Left lung (tissue), 14 donors: ENCODE measurements at regions of chr1 and their contacts with region 1.

Region 1: DNA sequence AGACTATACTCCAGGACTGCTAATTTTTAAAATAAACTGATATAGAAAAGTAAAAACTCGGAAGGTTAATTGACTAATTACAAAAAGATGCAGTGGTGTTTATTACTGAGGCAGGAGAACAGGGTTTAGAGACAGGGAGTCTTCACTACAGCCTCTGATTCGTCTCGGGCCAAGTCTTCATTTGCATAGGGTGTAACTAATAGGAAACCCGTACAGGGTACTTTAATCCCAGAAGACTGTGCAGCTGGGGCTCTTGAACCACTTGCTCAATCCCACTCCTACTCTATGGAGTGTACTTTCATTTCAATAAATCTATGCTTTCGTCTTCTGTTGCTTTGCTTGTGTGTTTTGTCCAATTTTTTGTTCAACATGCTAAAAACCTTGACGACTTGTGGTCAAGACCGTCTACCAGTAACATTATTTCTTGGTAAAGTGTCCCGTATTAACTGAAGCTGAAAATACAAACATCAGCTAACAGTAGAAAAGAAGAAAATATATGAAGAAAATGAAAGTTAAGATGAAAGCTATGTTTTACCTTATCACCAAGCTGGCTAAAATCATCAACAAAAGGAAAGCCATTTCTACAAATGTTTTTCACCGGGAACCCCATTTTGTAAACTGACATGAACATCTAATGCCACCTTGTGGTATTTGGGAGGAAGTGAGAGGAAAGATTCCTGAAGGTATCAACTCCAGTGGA is 8.0 kb downstream of the SDHB start:
- DNase-seq: peak in 2 of 4 donors; percentile 33 to 57
- ATAC-seq: peak; percentile 94
- H3K4me3 ChIP-seq: peak overlapping the region in 1 of 2 donors; percentile 19
- H3K27ac ChIP-seq: peak overlapping the region; percentile 29 to 46
- H3K4me1 ChIP-seq: peaks cover 5 to 23% of the 10 kb centered on the region in 2 donors
- H3K27me3 ChIP-seq: no peaks in the 10 kb centered on the region
- CTCF ChIP-seq: peak; percentile 65 to 66

Region 2: DNA sequence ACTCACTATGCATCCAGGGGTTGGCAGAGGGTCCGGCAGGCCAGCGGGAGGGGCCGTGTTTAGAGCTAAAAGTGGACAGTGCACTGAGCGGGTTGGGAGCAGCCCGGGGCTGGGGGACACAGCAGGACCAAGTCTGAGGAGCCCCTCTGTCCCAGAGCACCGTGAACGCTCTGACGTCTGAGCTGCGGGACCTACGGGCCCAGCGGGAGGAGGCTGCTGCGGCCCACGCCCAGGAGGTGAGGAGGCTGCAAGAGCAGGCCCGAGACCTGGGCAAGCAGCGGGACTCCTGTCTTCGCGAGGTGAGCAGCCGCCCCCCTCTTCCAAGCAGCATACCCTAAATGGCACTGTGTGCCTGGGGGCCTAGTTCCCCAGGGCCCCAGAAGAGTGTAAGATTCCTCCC is 91.2 kb before region 1 on chr1:
- intact Hi-C with region 1: loop called in 1 of 2 experiments (anchors 5 kb)
- DNase-seq: no peak
- ATAC-seq: no peak
- H3K4me3 ChIP-seq: no peak overlapping the region
- H3K27ac ChIP-seq: no peak overlapping the region
- H3K4me1 ChIP-seq: peaks cover 0 to 5% of the 10 kb centered on the region in 2 donors
- H3K27me3 ChIP-seq: no peaks in the 10 kb centered on the region
- CTCF ChIP-seq: no peak

Region 3: DNA sequence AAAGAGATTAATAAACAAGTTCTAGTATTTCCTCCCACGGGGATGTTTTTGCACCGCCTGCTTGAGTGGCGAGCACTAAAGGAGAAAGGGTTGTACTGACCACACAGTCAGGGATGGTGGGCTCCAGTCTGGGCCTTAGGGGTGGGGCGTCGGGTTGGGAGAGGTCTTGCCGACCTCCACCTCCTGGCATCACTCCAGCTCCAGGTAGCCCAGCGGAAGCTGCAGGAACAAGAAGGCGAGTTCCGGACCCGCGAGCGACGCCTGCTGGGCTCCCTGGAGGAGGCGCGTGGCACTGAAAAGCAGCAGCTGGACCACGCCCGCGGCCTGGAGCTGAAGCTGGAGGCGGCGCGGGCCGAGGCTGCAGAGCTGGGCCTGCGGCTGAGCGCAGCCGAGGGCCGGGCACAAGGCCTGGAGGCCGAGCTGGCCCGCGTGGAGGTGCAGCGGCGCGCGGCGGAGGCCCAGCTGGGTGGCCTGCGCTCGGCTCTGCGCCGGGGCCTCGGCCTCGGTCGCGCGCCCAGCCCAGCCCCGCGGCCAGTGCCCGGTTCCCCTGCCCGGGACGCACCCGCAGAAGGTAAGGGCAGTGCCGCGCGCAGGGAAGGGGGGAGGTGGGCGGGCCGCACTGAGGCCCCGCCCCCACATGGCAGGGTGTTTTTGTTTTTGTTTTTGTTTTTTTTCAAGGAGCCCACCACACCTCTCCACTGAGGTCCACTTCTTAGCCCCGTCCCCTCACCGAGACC is 85.1 kb before region 1 on chr1:
- intact Hi-C with region 1: loop called in 1 of 2 experiments (anchors 5 kb)
- DNase-seq: peak; percentile 64 to 95 (median 88)
- ATAC-seq: peak; percentile 93
- H3K4me3 ChIP-seq: peak overlapping the region; percentile 19 to 28
- H3K27ac ChIP-seq: peak overlapping the region in 1 of 2 donors; percentile 45
- H3K4me1 ChIP-seq: peaks cover 8 to 11% of the 10 kb centered on the region in 2 donors
- H3K27me3 ChIP-seq: no peaks in the 10 kb centered on the region
- CTCF ChIP-seq: peak; percentile 65 to 72

Region 4: GRCh38 chr1:16999863-17000262 is 45.9 kb before region 1 on chr1:
- intact Hi-C with region 1: no loop called
- DNase-seq: no peak
- ATAC-seq: no peak
- H3K4me3 ChIP-seq: no peak overlapping the region
- H3K27ac ChIP-seq: no peak overlapping the region
- H3K4me1 ChIP-seq: no peaks in the 10 kb centered on the region
- H3K27me3 ChIP-seq: no peaks in the 10 kb centered on the region
- CTCF ChIP-seq: no peak